ENCODE measurements at regions of chr17 and their contacts with region 1.

Region 1: GRCh38 chr17:2303204-2304188 is at the starts of genes SMG6 and SRR:
- H3K4me3 ChIP-seq: peak within 1 kb of the TSS; percentile 91
- H3K27ac ChIP-seq: peak within 1 kb of the TSS; percentile 97
- H3K4me1 ChIP-seq: no peaks in the 10 kb centered on the region
- CTCF ChIP-seq: peak; percentile 33; the same call in 1 of the 2 replicates

Region 2: DNA sequence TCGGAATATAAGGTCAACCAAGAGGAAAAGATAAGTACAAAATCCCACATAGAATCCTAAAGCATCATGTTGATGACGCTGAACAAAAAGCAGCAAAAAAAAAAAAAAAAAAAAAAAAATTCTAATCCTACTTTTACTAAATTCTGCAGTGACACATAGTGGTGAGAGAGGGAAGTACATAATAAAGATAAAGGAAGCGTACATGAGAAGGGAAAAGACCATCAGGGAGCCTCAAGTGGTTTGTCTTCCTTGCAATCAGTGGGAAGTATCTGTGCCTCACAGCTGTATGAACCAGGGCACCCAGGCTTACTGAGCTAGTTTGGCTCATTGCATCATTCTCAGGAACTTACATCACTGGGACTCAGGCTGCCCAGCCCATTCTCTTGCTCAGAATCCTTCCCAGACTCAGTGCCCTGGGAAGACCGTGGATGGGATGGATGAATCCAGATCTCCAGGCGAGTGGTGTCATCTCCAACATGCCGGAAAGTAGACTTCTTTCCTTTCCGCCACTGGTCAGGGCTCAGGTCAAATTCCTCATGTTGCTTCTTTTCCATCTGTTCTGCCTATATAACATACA is 21.1 kb before region 1 on chr17:
- CTCF ChIA-PET with region 1: interaction called, 15 read pairs
- POLR2A ChIA-PET with region 1: interaction called, 8 read pairs
- H3K4me3 ChIP-seq: no peak overlapping the region
- H3K27ac ChIP-seq: no peak overlapping the region
- H3K4me1 ChIP-seq: no peaks in the 10 kb centered on the region
- CTCF ChIP-seq: peak; percentile 40; the same call in 1 of the 2 replicates

Region 3: DNA sequence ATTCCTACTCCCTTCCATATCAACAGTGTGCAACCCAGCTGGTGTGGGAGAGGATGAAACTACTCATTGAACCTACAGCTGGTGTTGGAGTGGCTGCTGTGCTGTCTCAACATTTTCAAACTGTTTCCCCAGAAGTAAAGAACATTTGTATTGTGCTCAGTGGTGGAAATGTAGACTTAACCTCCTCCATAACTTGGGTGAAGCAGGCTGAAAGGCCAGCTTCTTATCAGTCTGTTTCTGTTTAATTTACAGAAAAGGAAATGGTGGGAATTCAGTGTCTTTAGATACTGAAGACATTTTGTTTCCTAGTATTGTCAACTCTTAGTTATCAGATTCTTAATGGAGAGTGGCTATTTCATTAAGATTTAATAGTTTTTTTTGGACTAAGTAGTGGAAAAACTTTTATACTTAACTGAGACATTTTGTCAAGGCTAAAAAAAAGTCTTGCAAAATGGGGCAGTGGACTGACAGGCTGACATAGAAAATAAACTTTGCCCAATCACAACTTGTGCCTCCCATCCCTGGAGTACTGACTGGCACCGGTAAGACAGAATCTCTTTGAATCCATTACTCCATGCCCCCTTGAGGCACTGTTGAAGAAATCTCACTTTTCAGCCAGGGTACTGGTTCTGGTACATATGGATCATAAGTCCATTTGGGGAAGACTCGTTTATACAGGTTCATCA is 20.3 kb after region 1 on chr17:
- CTCF ChIA-PET with region 1: interaction called, 3 read pairs
- POLR2A ChIA-PET with region 1: interaction called, 13 read pairs
- H3K4me3 ChIP-seq: no peak overlapping the region
- H3K27ac ChIP-seq: no peak overlapping the region
- H3K4me1 ChIP-seq: no peaks in the 10 kb centered on the region
- CTCF ChIP-seq: no peak

Region 4: GRCh38 chr17:2336215-2336851 is 32.8 kb after region 1 on chr17 and contains the start of gene TSR1:
- CTCF ChIA-PET with region 1: interaction called, 4 read pairs
- POLR2A ChIA-PET with region 1: interaction called, 46 read pairs
- H3K4me3 ChIP-seq: peak within 1 kb of the TSS; percentile 56
- H3K27ac ChIP-seq: peak within 1 kb of the TSS; percentile 88
- H3K4me1 ChIP-seq: peaks cover 14% of the 10 kb centered on the region
- CTCF ChIP-seq: peak; percentile 77

Region 5: GRCh38 chr17:2347547-2348307 is 44.2 kb after region 1 on chr17:
- CTCF ChIA-PET with region 1: interaction called, 8 read pairs
- POLR2A ChIA-PET with region 1: interaction called, 11 read pairs
- H3K4me3 ChIP-seq: no peak overlapping the region
- H3K27ac ChIP-seq: peak overlapping the region; percentile 48; the same call in 1 of the 2 replicates
- H3K4me1 ChIP-seq: peaks cover 12% of the 10 kb centered on the region
- CTCF ChIP-seq: no peak

Region 6: GRCh38 chr17:2401426-2402221 is 98.1 kb after region 1 on chr17:
- CTCF ChIA-PET with region 1: no interaction called
- POLR2A ChIA-PET with region 1: interaction called, 25 read pairs
- H3K4me3 ChIP-seq: peak overlapping the region; percentile 43
- H3K27ac ChIP-seq: peak overlapping the region; percentile 77
- H3K4me1 ChIP-seq: peaks cover 19% of the 10 kb centered on the region
- CTCF ChIP-seq: no peak

Measured in HEK293 (cell line).